ENCODE measurements at regions of chr5 and their contacts with region 1.

Region 1: DNA sequence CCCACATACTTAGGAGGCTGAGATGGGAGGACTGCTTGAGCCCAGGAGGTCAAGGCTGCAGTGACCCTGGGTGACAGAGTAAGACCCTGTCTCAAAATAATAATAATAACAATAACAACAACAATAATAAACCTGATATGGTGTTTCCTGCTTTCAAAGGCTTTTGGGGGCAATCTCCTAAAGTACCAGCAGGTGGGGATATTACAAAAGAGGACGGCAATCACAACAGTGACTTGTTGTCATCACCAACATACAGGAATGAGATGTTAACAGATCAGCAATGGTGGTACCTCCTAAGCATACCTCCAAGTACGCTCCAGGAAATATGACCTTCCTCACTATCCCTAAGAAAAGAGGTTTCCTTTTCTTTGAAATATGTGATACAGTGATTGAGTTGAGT is 91.1 kb upstream of the RNF180 start:
- DNase-seq: peak in 1 of 2 experiments; percentile 52
- H3K4me3 ChIP-seq: no peak overlapping the region
- H3K4me3 Mint-ChIP-seq: no peak overlapping the region
- H3K27ac Mint-ChIP-seq: no peak overlapping the region
- H3K4me1 ChIP-seq: no peaks in the 10 kb centered on the region
- H3K4me1 Mint-ChIP-seq: no peaks in the 10 kb centered on the region
- H3K27me3 ChIP-seq: no peaks in the 10 kb centered on the region
- H3K27me3 Mint-ChIP-seq: no peaks in the 10 kb centered on the region
- CTCF ChIP-seq: peak; percentile 46 to 70

Region 2: GRCh38 chr5:64207978-64208377 is 133.4 kb after region 1 on chr5:
- CTCF ChIA-PET with region 1: no interaction called
- POLR2A ChIA-PET with region 1: no interaction called
- intact Hi-C with region 1: loop called (anchors 1 kb)
- DNase-seq: no peak
- H3K4me3 ChIP-seq: no peak overlapping the region
- H3K4me3 Mint-ChIP-seq: no peak overlapping the region
- H3K27ac Mint-ChIP-seq: no peak overlapping the region
- H3K4me1 ChIP-seq: no peaks in the 10 kb centered on the region
- H3K4me1 Mint-ChIP-seq: no peaks in the 10 kb centered on the region
- H3K27me3 ChIP-seq: no peaks in the 10 kb centered on the region
- H3K27me3 Mint-ChIP-seq: peaks cover 5% of the 10 kb centered on the region
- CTCF ChIP-seq: peak in 1 of 2 experiments; percentile 45

Measured in Caco-2 (cell line).